OCI-LY7 (cell line): ENCODE measurements at regions of chr1 and their contacts with region 1.

Region 1: GRCh38 chr1:74403606-74404005 is 108.8 kb downstream of the LRRC53 start:
- DNase-seq: no peak
- H3K4me3 ChIP-seq: no peak overlapping the region
- H3K27ac ChIP-seq: no peak overlapping the region
- H3K4me1 ChIP-seq: no peaks in the 10 kb centered on the region
- CTCF ChIP-seq: no peak

Region 2: DNA sequence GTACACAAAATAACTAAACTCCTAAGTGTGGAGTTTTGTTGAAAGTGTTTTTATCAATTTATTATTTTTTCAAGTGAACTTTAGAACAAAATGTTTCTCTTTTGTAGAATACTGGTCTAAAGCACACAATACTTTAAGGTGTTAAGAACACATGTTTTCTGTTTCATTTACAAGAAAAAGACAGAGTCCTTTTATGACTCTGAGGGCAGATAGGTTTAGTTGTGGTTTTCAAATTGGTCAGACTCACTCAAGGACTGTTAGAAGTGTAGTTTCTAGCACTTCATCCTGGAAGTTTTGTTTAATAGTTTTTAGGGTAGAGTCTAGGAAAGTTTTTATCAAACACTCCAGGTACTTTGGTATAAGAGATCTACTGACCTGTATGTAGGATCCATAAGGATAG is 582.1 kb before region 1 on chr1:
- CTCF ChIA-PET with region 1: no interaction called
- POLR2A ChIA-PET with region 1: no interaction called
- intact Hi-C with region 1: no loop called
- DNase-seq: no peak
- H3K4me3 ChIP-seq: no peak overlapping the region
- H3K27ac ChIP-seq: no peak overlapping the region
- H3K4me1 ChIP-seq: no peaks in the 10 kb centered on the region
- CTCF ChIP-seq: no peak

Region 3: DNA sequence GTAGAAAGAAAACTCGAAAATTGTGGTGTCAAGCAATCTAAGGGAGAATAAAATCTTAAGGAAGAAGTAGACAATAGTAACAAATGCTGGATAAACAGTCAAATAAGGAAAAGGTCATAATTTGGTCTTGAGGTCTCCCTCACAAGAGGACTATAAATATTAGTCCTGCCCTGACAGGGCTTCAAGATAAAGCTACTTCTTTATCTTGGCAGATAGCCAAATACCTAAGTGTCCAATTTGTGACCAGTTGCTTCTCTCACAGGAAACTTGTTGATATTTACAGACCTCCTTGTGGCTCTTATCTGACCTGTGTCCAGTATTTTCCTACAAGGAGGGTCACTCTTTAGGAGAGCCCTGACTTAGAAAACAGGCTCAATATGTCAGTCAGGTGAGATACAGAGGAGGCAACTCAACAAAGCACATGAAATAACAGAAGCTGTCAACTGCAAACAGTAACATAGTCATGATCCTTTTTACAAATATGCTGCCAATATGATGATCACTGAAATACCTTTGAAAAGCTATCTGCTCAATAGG is 79.6 kb before region 1 on chr1:
- CTCF ChIA-PET with region 1: no interaction called
- POLR2A ChIA-PET with region 1: no interaction called
- intact Hi-C with region 1: no loop called
- DNase-seq: no peak
- H3K4me3 ChIP-seq: no peak overlapping the region
- H3K27ac ChIP-seq: no peak overlapping the region
- H3K4me1 ChIP-seq: no peaks in the 10 kb centered on the region
- CTCF ChIP-seq: no peak

Region 4: GRCh38 chr1:74976491-74976890 is 572.9 kb after region 1 on chr1:
- CTCF ChIA-PET with region 1: no interaction called
- POLR2A ChIA-PET with region 1: no interaction called
- intact Hi-C with region 1: loop called (anchors 5 kb)
- DNase-seq: no peak
- H3K4me3 ChIP-seq: no peak overlapping the region
- H3K27ac ChIP-seq: no peak overlapping the region
- H3K4me1 ChIP-seq: no peaks in the 10 kb centered on the region
- CTCF ChIP-seq: no peak